ENCODE measurements at regions of chr3 and their contacts with region 1.

Region 1: DNA sequence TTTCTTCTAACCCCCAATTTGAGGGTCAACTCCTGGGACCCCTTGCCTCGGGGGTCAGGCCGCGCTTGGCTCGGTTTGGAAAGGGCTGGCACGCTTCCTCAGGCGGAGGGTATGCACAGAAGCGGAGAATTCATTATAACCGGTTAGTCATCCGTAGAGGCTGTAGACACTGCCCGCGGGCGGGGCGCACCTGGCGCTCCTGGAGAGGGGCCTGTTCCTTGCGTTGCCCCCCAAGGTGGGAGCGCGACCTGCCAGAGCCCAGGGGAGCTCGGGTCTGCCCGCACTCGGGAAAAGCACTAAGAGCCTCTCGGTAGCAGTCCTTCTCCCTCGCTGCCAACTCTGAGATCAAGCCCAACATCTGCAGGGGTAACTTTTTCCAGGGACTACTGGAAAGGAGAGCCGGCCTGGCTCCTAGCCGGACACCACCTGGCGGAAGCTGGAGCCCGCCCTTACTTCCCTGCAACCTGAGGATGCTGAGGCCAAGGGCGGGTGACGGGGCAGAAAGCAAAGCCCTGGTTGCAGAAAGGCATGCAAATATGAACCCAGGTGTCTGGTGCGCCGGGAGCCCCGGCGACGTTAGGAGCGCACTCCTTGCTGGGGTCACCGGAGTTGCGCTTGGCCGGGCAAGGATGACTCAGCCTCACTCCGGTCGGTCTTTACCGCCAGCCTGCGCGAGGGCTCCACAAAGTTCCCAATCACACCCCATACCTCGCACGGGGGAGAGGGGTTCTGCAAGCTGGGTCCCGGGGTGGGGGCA is 1.5 kb upstream of the CACNA2D3 start:
- DNase-seq: no peak
- H3K4me3 Mint-ChIP-seq: no peak overlapping the region
- H3K27ac Mint-ChIP-seq: no peak overlapping the region
- H3K4me1 Mint-ChIP-seq: no peaks in the 10 kb centered on the region
- H3K27me3 Mint-ChIP-seq: peaks cover 38% of the 10 kb centered on the region

Region 2: GRCh38 chr3:54138937-54139569 is 18.2 kb after region 1 on chr3:
- intact Hi-C with region 1: no loop called
- DNase-seq: no peak
- H3K4me3 Mint-ChIP-seq: no peak overlapping the region
- H3K27ac Mint-ChIP-seq: no peak overlapping the region
- H3K4me1 Mint-ChIP-seq: no peaks in the 10 kb centered on the region
- H3K27me3 Mint-ChIP-seq: no peaks in the 10 kb centered on the region

Region 3: DNA sequence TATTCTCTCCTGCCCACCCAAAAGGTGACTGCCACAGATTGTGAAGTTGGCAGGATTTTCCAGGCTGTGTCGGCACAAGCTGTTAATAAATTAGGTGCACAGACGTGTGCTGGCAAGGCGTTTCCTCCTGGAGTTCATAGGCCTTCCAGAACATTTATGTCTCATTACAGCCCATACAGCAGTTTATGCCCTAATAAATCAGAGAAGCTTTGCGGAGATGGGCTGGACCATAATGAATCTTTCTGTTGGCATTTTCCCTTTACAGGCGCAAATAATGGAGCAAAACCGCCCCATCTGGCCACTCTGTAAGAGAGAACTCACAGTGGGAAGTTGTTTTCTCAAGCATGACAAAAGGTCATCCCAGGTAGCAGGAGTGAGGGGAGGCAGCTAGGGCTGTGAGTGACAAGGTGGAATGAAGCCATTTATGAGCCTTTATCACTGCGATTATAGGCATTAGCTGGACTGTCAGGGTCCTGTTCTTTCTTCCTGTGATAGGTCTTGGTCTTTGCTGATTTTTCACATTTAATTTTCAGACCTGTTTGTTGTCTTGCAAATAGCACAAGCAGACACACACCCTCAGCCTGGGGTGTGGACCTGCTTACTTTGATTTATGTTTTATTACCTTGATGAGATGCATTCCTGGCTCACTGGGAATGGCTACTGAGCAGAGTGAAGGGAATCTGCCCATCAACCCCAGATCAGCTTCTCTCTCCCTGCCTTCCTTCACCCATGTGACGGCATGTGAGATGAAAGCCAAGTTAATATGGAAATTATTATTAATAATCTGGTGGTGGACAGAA is 549.6 kb after region 1 on chr3:
- intact Hi-C with region 1: no loop called
- DNase-seq: no peak
- H3K4me3 Mint-ChIP-seq: no peak overlapping the region
- H3K27ac Mint-ChIP-seq: no peak overlapping the region
- H3K4me1 Mint-ChIP-seq: no peaks in the 10 kb centered on the region
- H3K27me3 Mint-ChIP-seq: no peaks in the 10 kb centered on the region

Region 4: GRCh38 chr3:55485211-55485791 is 1364.5 kb after region 1 on chr3:
- intact Hi-C with region 1: loop called (anchors 5 kb)
- DNase-seq: peak; percentile 12
- H3K4me3 Mint-ChIP-seq: no peak overlapping the region
- H3K27ac Mint-ChIP-seq: no peak overlapping the region
- H3K4me1 Mint-ChIP-seq: peaks cover 5% of the 10 kb centered on the region
- H3K27me3 Mint-ChIP-seq: peaks cover 80% of the 10 kb centered on the region

Measured in activated T-helper 1 cell treated with anti-CD3 and anti-CD28 coated beads, Interleukin-12 subunit alpha, Interleukin-12 subunit beta, Interleukin-2, Interleukin-4 antibody, amounts not matched to agents 30 ng/mL and 10 ng/mL and 1 ng/mL, durations not matched to agents 14 hours and 24 hours and 36 hours (primary cell).